Dorsolateral prefrontal cortex (tissue), 120 donors: ENCODE measurements at regions of chr13 and their contacts with region 1.

Region 1: GRCh38 chr13:99176309-99177276 is 24.1 kb upstream of the UBAC2 start:
- DNase-seq: peak; percentile 53 to 80 (median 68)
- H3K4me3 ChIP-seq: peak overlapping the region in 26 of 59 donors; percentile 1 to 44 (median 30)
- H3K27ac ChIP-seq: no peak overlapping the region
- H3K27me3 ChIP-seq: peaks cover 0 to 10% (median 0%) of the 10 kb centered on the region in 45 donors
- CTCF ChIP-seq: peak; percentile 64 to 97 (median 90)

Region 2: DNA sequence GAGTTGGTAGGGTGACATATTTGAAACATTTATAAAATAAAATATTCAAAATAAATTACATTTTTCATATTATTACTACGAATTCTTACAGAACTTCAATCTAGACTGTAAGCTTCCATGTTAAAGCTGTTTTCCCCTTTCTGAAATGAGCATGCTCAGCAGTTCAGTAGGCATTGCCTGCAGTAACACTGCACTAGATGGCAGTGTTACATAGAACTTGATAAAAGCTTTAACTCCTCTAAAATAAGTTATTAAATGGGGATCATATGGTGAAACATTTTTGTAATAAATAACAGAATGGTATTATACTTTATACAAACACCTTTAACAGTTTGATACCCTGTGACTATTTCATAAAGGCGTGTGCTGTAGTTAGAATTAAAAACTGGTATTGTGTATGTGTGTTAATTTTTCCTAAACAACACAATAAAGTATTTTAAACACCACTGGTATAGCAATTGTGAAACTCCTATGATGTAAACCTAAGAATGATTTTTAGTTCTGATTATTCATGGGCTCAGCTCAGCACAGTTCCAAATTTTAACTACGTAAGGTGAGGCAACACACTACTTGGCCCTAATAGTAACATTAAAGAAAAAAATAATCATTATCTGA is 93.1 kb after region 1 on chr13:
- intact Hi-C with region 1: loop called (anchors 1 to 5 kb)
- DNase-seq: peak in 1 of 10 donors; percentile 18
- H3K4me3 ChIP-seq: no peak overlapping the region
- H3K27ac ChIP-seq: peak overlapping the region in 1 of 59 donors; percentile 16
- H3K27me3 ChIP-seq: no peaks in the 10 kb centered on the region
- CTCF ChIP-seq: peak; percentile 32 to 87 (median 70)

Region 3: DNA sequence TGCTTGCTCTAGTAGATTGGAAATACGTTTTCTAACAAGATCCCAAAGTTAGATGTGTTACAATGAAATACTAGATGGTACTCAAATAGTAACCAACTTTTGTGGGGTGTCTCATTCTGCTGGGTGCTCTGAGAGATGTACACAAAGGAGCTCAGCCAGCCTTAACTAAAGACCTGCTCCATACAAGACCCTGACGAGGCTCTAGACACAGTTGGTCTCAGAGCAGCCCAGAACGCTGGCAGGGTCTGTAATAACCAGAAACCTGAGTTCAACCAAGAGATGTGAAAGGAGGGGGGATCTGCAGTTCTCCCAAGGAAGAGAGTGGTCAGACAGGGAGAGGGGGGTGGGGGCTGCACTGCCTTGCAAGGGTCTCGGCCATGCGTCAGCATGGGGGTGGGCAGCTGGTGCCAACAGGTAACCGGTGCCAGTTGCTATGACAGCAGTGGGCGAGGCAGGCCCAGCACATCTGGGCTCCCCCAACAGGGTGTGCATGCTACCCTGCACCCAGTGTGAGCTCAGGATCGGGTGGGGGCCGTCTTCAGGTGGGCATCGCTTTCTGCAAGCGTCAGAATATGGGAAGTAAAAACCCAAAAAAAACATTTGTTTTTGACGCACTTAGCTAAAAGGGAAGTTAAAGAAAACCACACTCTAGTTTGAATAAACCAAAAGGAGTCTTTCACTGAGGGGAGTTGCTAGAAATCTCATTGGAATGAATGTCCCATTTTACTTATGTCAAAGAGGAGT is 198.6 kb after region 1 on chr13:
- intact Hi-C with region 1: no loop called
- DNase-seq: no peak
- H3K4me3 ChIP-seq: no peak overlapping the region
- H3K27ac ChIP-seq: peak overlapping the region in 3 of 59 donors; percentile 21 to 39 (median 25)
- H3K27me3 ChIP-seq: no peaks in the 10 kb centered on the region
- CTCF ChIP-seq: no peak

Region 4: GRCh38 chr13:99436686-99437416 is 260.3 kb after region 1 on chr13:
- intact Hi-C with region 1: loop called (anchors 2 to 5 kb)
- DNase-seq: peak; percentile 57 to 92 (median 84)
- H3K4me3 ChIP-seq: peak overlapping the region in 45 of 59 donors; percentile 1 to 52 (median 27)
- H3K27ac ChIP-seq: no peak overlapping the region
- H3K27me3 ChIP-seq: peaks cover 0 to 3% (median 0%) of the 10 kb centered on the region in 45 donors
- CTCF ChIP-seq: peak in 55 of 56 donors; percentile 95 to 100 (median 100)